ENCODE measurements at regions of chr12 and their contacts with region 1.

Region 1: DNA sequence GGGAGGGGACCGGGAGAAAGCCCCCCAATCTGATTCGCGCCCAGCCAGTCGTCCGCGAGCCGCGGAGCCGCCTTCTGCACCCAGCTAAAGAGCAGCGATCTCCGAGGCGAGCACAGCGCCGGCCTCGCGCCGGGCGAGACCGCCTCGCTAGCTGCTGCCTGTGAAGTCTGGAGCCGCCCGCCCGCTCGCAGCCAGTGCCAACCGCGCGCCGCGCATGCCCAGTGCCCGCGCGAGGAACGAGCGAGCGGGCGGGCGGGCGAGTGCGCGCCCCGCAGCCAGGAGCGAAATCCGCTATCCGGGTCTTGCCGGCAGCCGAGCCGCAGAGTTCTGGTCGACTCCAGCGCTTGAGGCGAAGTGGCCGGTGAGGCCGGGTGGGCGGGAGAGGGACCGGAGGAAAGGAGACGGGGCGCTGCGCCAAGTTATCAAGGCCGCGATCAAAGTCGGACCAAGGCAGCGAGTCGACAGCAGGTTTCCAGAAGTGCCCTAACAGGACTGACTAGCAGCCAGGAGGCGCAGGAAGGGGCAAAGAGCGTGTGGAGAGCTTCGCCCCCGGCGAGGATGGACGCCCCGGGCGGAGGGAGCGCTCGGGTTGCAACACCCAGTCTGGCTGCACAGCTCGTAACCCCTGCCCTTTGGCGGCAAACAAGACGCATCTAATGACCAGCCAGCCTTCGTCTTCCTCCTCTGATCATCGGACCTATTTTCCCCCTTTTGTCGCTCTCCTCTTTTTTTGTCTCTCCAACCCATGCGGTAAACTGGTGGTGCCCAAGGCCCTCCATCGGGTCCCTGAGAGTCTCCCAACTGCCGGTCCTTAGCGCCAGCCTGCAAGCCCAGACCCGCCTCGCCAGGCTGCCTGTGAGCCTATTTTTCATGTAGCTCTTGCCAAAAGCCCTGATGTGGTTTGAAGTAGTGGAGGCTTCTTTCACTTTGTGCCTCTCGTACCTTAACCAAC is at the start of gene EPS8:
- DNase-seq: peak; percentile 91
- total RNA-seq, gene EPS8: 21.2 TPM

Region 2: DNA sequence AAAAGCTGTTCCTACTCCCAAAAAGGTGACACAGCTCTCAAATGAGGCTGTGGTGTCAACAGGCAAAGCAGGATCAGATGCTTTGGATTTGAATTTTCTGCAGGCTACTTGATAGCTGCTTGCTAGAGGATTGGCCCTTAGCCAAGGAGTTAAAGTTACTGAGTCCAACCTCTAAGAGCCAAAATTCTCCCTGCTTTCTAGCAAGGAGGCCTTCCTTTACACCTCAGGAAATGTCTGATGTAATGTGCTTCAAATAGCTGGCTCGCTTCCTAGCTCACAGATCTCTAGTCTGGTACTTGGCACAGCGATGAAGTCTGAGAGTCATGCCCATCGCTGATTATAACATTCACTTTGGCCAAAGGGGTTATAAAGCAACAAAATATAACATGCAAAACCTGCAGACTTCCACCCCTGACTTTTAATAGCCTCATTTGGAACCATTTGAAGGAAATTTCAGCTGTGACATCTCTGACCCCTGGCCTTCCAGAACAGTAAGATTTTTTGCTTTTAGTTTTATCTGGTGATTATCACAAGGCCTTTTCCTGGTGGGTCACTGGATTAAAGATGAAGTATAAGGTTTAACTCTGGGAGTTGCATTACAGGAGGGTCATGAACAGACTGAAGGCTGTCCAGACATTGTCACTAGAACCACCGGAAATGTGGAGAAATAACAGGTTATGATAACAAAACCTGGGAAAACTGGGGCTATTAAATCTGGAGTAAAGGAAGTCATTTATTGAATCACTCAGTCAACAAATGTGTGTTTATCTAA is 190.0 kb before region 1 on chr12:
- intact Hi-C with region 1: loop called (anchors 2 kb)
- DNase-seq: no peak

Region 3: GRCh38 chr12:15629108-15629507 is 160.4 kb before region 1 on chr12:
- intact Hi-C with region 1: loop called (anchors 10 kb)
- DNase-seq: no peak

Region 4: GRCh38 chr12:15700595-15700994 is 88.9 kb before region 1 on chr12:
- intact Hi-C with region 1: loop called (anchors 5 kb)
- DNase-seq: no peak

Region 5: GRCh38 chr12:15757553-15758265 is 31.8 kb before region 1 on chr12:
- intact Hi-C with region 1: no loop called
- DNase-seq: no peak

Region 6: GRCh38 chr12:15842108-15842507 is 52.6 kb after region 1 on chr12:
- intact Hi-C with region 1: loop called (anchors 10 kb)
- DNase-seq: no peak

Region 7: DNA sequence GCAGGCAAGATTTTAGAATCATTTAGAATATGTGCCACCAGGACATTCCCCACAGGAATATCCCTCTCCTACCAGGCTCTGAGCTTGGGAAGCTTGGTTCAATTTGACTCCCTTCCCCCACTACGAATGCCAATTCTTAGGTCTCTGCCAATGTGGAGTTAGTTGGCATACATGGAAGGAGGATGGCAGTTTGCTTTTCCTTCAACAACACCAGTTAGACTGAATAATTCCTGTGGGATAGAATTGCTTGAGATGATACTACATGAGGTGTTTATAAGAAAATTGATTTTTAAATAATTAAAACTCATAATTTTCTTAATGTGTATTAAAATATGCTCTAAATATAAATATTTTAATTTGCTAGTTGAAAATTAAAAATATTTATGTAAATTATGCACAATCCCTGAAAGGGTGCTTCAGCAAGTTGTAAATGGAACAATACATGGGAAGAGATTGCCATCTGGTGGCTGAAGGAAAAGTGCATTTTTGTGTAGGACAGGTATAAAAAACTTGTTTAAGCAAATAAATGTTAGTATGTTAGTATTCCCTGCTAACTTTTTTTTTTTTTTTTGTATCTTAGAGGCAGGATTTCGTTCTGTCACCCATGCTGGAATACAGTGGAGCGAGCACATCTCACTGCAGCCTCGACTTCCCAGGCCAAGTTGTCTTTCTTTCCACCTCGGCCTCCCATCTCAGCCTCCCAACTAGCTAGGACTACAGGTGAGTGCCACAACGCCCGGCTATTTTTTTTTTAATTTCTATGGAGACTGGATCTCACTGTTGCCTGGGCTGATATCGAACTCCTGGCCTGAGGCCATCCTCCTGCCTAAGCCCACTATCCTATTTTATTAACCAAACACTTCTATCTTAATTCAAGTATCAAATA is 66.8 kb after region 1 on chr12:
- intact Hi-C with region 1: no loop called
- DNase-seq: no peak

Measured in cardiac septum (tissue), 1 donor.